ENCODE measurements at regions of chr5 and their contacts with region 1.

Region 1: GRCh38 chr5:177370488-177371119 is 12.9 kb downstream of the RGS14 start:
- DNase-seq: peak; percentile 92
- H3K4me3 ChIP-seq: peak overlapping the region; percentile 55 to 56; a peak in 3 of 4 replicates
- H3K27ac ChIP-seq: no peak overlapping the region
- H3K4me1 ChIP-seq: peaks cover 6 to 37% of the 10 kb centered on the region in 2 experiments; a peak in 3 of 4 replicates
- H3K27me3 ChIP-seq: no peaks in the 10 kb centered on the region
- CTCF ChIP-seq: peak; percentile 49
- EP300 ChIP-seq: no peak
- RAD21 ChIP-seq: peak; percentile 37; the same call in 1 of the 2 replicates

Region 2: GRCh38 chr5:177311723-177312648 is 58.6 kb before region 1 on chr5 and contains the start of gene MXD3:
- CTCF ChIA-PET with region 1: interaction called, 25 read pairs
- POLR2A ChIA-PET with region 1: interaction called, 3 read pairs
- DNase-seq: peak; percentile 97
- H3K4me3 ChIP-seq: peak within 1 kb of the TSS; percentile 59 to 84
- H3K27ac ChIP-seq: peak within 1 kb of the TSS; percentile 73 to 88
- H3K4me1 ChIP-seq: peaks cover 4 to 25% of the 10 kb centered on the region in 2 experiments; a peak in 1 of 4 replicates
- H3K27me3 ChIP-seq: no peaks in the 10 kb centered on the region
- CTCF ChIP-seq: no peak
- EP300 ChIP-seq: 0 out of 4 replicates have a peak, but pooled peaks of 1 of the 2 experiments have one; percentile 39
- RAD21 ChIP-seq: no peak
- polyA plus RNA-seq, gene MXD3: 22.6 and 23.1 TPM in 2 replicates

Region 3: DNA sequence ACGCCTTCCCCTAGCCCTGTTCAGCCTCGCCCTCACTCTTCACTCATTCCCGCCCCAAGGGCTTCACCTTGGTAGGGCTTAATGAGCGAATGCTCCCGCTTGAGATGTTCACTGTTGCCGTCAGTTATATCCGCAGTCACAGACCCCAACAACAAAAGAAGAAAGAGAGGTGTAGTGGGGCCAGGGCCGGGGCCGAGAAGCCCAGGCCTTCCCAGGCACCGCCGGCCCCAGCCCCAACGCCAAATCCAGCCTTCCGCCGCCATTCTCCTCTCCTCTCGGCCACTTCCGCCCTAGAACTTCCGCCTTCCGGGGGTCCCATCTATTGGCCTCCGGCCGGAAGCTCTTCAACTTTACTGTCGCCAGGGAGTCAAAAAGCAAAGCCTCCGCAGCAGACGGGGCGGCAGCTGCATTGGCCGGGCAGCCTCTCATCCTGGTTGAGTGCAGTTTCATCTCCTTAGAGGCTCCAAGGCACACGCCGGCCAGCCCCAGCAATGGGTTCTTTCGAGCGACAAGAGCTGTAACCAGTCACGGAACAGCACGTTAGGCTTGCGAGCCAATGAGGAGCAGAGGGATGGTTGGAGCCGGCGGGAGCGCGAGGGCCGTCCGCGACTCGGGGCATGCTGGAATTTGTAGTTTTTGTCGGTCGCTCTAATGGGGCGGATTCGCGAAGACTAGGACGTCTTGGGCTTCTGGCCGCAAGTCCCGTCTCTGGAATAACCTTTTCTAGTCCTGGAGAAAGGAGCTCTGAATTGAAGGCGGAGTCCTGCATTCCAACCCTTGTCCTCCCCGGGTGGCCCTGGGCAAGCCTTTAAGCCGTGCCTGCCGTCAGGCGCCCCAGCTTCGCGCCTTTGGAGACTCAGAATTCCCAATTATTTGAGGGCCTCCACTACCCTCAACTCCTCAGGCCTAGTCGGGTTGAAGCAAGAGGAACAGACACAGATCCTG is 18.9 kb before region 1 on chr5 and contains the start of gene LMAN2:
- CTCF ChIA-PET with region 1: interaction called, 14 read pairs
- POLR2A ChIA-PET with region 1: interaction called, 18 read pairs
- DNase-seq: peak; percentile 95
- H3K4me3 ChIP-seq: peak within 1 kb of the TSS; percentile 96 to 100
- H3K27ac ChIP-seq: peak within 1 kb of the TSS; percentile 98
- H3K4me1 ChIP-seq: peaks cover 5 to 23% of the 10 kb centered on the region in 2 experiments; a peak in 3 of 4 replicates
- H3K27me3 ChIP-seq: no peaks in the 10 kb centered on the region
- CTCF ChIP-seq: no peak
- EP300 ChIP-seq: no peak
- RAD21 ChIP-seq: no peak
- polyA plus RNA-seq, gene LMAN2: 380 and 500 TPM in 2 replicates

Region 4: DNA sequence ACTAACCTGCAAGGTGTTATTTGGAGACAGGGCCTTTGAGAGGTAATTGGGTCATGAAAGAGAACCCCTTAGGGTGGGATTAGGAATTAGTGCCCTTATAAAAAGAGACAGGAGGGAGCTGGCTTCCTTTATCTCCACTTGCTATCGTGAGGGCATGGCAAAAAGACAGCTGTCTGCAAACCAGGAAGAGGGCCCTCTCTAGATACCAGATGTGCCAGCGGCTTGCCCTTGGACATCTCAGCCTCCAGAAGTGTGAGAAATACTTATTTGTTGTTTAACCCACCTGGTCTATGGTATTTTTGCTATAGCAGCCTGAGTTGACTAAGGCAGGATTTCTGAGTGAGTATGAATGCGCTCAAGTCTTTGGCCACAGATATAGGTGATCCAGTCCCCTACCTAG is 13.9 kb before region 1 on chr5:
- CTCF ChIA-PET with region 1: interaction called, 14 read pairs
- POLR2A ChIA-PET with region 1: interaction called, 18 read pairs
- DNase-seq: no peak
- H3K4me3 ChIP-seq: no peak overlapping the region
- H3K27ac ChIP-seq: no peak overlapping the region
- H3K4me1 ChIP-seq: peaks cover 0 to 10% of the 10 kb centered on the region in 2 experiments; a peak in 1 of 4 replicates
- H3K27me3 ChIP-seq: no peaks in the 10 kb centered on the region
- CTCF ChIP-seq: no peak
- EP300 ChIP-seq: no peak
- RAD21 ChIP-seq: no peak

Region 5: DNA sequence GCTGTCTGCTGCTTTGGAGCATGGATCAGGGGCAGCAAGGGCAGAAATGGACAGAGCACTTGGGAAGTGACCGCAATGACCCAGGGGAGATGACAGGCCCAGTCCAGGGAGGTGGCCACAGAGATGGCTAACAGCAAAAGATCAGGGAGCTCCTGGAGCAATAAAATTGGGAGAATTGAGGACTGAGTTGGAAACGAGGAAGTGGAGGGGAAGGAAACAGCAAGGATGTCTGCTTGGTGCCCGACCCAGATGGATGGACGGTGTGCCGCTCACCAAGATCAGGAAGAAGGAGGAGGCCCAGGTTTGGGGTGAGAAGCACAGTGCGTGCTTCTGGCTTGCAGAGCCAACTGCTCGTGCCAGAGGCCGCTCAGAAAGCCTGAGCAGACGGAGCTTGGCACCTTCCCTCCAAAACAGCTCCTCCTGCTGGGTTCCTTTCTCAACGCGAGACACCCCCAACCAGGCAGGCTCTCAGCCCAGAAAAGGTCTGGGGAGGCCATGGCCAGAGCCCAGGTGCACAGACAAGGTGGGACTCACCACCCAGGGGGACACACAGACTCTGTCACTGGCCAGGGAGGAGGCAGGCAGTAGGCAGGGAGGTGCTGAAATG is 11.9 kb after region 1 on chr5:
- CTCF ChIA-PET with region 1: interaction called, 58 read pairs
- POLR2A ChIA-PET with region 1: interaction called, 3 read pairs
- DNase-seq: peak; percentile 56
- H3K4me3 ChIP-seq: no peak overlapping the region
- H3K27ac ChIP-seq: no peak overlapping the region
- H3K4me1 ChIP-seq: peaks cover 0 to 7% of the 10 kb centered on the region in 2 experiments; a peak in 2 of 4 replicates
- H3K27me3 ChIP-seq: no peaks in the 10 kb centered on the region
- CTCF ChIP-seq: peak; percentile 27
- EP300 ChIP-seq: no peak
- RAD21 ChIP-seq: peak; percentile 38

Region 6: DNA sequence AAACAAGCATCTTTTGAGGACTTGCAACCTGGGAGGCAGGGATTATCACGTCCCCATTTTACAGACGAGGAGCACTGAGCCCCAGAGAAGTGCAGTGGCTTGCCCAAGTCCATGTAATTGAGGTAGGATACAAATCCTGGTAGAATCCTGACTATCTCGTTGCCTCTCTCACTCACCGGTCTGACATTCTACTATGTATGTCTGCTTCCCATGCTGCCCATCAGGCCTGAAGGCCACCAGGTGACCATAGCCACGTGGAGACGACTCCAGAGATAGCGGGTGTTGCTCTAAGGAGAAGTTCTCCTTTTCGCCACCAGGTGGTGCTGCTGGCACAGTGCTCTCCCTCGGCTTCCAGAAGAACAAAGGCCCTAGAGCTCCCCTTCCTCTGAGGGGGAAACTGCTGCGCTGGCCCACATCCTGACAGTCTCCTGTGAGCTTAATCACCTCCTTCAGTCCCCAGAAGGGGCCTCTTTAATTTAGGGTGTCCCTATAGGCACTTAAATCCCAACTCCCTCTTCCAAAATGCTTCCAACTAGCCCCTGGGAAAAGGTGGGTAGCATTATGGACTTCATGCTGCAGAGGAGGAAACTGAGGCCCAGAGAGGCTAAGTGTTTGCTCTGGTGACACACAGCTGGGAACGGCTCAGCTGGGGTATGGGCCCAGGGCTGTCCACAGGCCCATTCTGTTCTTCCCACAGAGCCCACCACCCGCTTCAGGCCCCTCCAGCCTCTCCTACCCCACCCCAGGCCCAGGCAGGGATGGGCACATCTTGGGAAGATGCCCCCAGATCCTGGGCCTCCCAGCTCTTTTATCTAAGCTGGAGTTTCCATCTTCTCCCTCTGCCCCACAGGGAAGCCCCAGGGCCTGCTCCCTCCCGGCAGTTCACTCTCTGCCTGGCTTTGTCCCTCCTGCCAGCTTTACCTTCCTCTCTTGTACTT is 20.0 kb after region 1 on chr5:
- CTCF ChIA-PET with region 1: interaction called, 58 read pairs
- POLR2A ChIA-PET with region 1: no interaction called
- DNase-seq: peak; percentile 95
- H3K4me3 ChIP-seq: no peak overlapping the region; a peak in 1 of 4 replicates
- H3K27ac ChIP-seq: no peak overlapping the region
- H3K4me1 ChIP-seq: peaks cover 0 to 3% of the 10 kb centered on the region in 2 experiments; a peak in 1 of 4 replicates
- H3K27me3 ChIP-seq: no peaks in the 10 kb centered on the region
- CTCF ChIP-seq: peak; percentile 88
- EP300 ChIP-seq: no peak
- RAD21 ChIP-seq: peak; percentile 95

Region 7: DNA sequence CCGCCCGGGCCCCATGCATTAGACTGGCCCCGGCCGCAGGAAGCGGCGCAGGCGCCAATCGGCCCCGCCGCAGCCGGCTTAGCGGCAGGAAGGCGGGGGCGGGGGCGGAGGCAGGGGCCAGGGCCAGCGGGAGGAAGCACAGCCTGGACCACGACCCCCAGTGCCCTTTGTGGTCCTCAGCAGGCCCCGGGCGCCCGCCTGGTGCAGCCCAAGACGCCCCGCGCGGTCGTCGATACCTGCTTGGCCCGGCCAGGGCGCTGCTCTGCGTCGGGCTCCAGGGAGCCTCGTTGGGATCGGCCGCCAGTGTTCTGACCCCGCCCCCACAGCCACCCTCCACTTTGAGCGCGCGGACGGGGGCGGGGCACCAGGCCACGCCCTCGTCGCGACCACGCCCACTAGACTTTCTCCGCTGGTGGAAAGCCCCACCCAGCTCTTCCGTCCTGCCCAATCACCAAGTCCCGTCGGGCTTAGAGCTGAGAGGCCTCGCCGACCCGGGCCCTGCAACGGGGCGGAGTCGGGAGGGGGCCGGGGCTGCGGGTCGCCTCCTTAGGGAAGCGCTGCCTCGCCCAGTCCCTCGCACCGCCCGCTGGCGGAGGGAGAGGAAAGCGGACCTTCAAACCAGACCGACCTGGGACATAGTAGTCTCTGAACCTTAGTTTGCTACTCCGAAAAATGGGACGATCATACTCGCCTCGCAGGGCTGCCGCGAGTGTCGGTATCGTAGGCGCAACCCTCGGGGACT is 126.9 kb after region 1 on chr5 and contains the start of gene PDLIM7:
- CTCF ChIA-PET with region 1: interaction called, 12 read pairs
- POLR2A ChIA-PET with region 1: no interaction called
- DNase-seq: peak; percentile 98
- H3K4me3 ChIP-seq: peak within 1 kb of the TSS; percentile 83 to 94
- H3K27ac ChIP-seq: peak within 1 kb of the TSS; percentile 80 to 94
- H3K4me1 ChIP-seq: peaks cover 32 to 62% of the 10 kb centered on the region in 2 experiments; a peak in 3 of 4 replicates
- H3K27me3 ChIP-seq: no peaks in the 10 kb centered on the region
- CTCF ChIP-seq: no peak; the same call in 1 of the 2 replicates
- EP300 ChIP-seq: no peak
- RAD21 ChIP-seq: no peak
- polyA plus RNA-seq, gene PDLIM7: 183 and 206 TPM in 2 replicates

Measured in SK-N-SH (cell line).